ENCODE measurements at regions of chr19 and their contacts with region 1.

Region 1: DNA sequence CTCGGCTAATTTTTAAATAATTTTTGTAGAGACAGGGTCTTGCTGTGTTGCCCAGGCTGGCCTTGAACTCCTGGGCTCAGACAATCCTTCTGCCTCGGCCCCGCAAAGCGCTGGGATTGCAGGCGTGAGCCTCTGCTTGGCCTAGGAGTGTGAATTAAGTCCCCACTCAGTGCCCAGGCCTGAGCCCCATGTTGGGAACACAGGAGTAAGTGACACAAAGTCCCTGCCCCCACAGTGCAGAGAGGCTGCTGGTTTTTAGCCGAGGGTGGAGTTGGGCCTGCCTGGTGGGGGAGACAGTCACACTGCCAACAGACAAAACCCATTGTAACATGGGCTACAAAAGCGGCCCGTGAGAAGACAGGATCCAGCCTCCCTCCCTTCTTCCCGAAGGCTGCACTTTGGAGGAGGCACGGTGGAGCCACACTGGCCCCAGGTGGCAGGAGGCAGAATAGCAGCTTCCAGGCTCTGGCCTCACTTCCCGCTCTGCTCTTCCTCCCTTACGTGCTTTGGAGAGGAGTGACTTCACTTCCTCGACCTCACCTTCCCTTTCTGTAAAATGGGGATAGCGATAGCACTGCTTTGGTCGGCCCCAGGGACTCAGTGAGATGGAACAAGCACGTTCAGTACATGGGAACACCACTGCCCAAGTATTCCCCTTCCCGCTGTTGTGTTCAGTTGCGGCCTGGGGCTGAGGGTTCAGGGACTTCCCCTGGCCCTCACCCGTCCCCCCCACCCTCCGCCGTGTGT is 15.2 kb upstream of the EHD2 start:
- DNase-seq: peak; percentile 79
- H3K4me3 ChIP-seq: no peak overlapping the region
- H3K27ac ChIP-seq: no peak overlapping the region
- H3K4me1 ChIP-seq: no peaks in the 10 kb centered on the region
- H3K27me3 ChIP-seq: no peaks in the 10 kb centered on the region
- CTCF ChIP-seq: peak; percentile 97 to 99
- POLR2A ChIP-seq: no peak

Region 2: GRCh38 chr19:47483800-47484690 is 214.0 kb before region 1 on chr19 and contains the start of gene KPTN:
- CTCF ChIA-PET with region 1: interaction called, 6 read pairs
- POLR2A ChIA-PET with region 1: no interaction called
- dilution Hi-C with region 1: no loop called
- intact Hi-C with region 1: loop called (anchors 1 kb)
- DNase-seq: peak; percentile 91
- H3K4me3 ChIP-seq: peak within 1 kb of the TSS; percentile 71 to 77 (median 77)
- H3K27ac ChIP-seq: peak within 1 kb of the TSS; percentile 88
- H3K4me1 ChIP-seq: peaks cover 3% of the 10 kb centered on the region
- H3K27me3 ChIP-seq: no peaks in the 10 kb centered on the region
- CTCF ChIP-seq: peak; percentile 93 to 97
- POLR2A ChIP-seq: peak; percentile 75
- total RNA-seq, gene KPTN: 13.7 and 15.5 TPM in 2 replicates

Region 3: DNA sequence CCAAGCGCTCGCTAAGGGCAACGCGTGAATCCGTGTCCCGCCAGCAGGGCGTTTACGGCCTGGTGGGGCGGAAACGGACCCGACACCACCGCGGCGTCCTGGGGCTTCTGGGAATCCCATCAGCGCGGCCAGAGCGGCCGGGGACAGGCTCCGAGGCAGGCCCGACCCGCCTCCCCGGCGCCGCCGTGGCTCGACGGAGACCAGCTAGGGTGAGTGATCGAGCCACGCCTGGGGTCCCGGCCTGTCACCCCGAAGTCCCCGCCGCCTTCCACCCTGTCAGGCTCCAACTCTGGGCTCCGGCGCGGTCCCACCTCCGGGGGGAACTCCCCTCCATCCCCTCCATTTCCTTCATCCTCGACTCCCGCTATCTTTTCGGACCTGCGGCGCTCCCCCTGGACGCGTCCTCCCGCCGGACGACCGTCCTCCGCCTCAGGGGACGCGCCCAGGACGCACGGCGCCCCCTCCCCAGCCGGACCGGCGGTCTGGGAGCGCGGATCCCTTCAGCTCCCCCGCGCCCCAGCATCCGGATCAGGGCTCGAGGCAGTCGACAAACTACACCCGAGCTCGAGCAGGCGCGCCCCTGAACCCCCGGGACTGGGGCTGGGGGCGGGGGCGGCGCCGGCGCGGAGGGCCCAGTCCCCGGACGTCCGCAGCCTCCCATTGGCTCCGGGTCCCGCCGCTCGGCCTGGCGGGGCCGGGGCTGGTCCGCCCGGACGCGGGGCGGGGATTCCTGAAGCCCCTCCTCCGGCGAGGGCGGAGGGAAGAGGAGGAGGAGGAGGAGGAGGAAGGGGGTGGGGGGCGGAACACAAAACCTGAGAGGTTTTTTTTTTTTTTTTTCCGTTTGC is 89.7 kb before region 1 on chr19:
- CTCF ChIA-PET with region 1: interaction called, 9 read pairs
- POLR2A ChIA-PET with region 1: no interaction called
- dilution Hi-C with region 1: no loop called
- intact Hi-C with region 1: loop called (anchors 1 kb)
- DNase-seq: peak; percentile 90
- H3K4me3 ChIP-seq: peak overlapping the region; percentile 67 to 92 (median 91)
- H3K27ac ChIP-seq: peak overlapping the region; percentile 90
- H3K4me1 ChIP-seq: peaks cover 25% of the 10 kb centered on the region
- H3K27me3 ChIP-seq: no peaks in the 10 kb centered on the region
- CTCF ChIP-seq: peak; percentile 22 to 46
- POLR2A ChIP-seq: peak; percentile 64

Region 4: GRCh38 chr19:47729992-47730889 is 32.2 kb after region 1 on chr19:
- CTCF ChIA-PET with region 1: no interaction called
- POLR2A ChIA-PET with region 1: no interaction called
- dilution Hi-C with region 1: no loop called
- intact Hi-C with region 1: no loop called
- DNase-seq: peak; percentile 93
- H3K4me3 ChIP-seq: peak overlapping the region in 1 of 3 experiments; percentile 18
- H3K27ac ChIP-seq: peak overlapping the region; percentile 97
- H3K4me1 ChIP-seq: peaks cover 23% of the 10 kb centered on the region
- H3K27me3 ChIP-seq: no peaks in the 10 kb centered on the region
- CTCF ChIP-seq: no peak
- POLR2A ChIP-seq: peak; percentile 21

Measured in endothelial cell of umbilical vein (primary cell).